ENCODE measurements at regions of chr5 and their contacts with region 1.

Region 1: GRCh38 chr5:44278469-44278868 is 110.8 kb downstream of the FGF10 start:
- DNase-seq: no peak
- ATAC-seq: no peak
- H3K4me3 ChIP-seq: no peak overlapping the region
- H3K27ac ChIP-seq: no peak overlapping the region
- H3K4me1 ChIP-seq: no peaks in the 10 kb centered on the region
- H3K27me3 ChIP-seq: no peaks in the 10 kb centered on the region
- CTCF ChIP-seq: no peak

Region 2: GRCh38 chr5:44225231-44226160 is 53.0 kb before region 1 on chr5:
- intact Hi-C with region 1: no loop called
- DNase-seq: no peak
- ATAC-seq: no peak
- H3K4me3 ChIP-seq: no peak overlapping the region
- H3K27ac ChIP-seq: no peak overlapping the region
- H3K4me1 ChIP-seq: no peaks in the 10 kb centered on the region
- H3K27me3 ChIP-seq: no peaks in the 10 kb centered on the region
- CTCF ChIP-seq: no peak

Region 3: GRCh38 chr5:44536650-44537260 is 258.3 kb after region 1 on chr5:
- intact Hi-C with region 1: no loop called
- DNase-seq: no peak
- ATAC-seq: peak in 3 of 4 donors; percentile 55 to 75 (median 59)
- H3K4me3 ChIP-seq: no peak overlapping the region
- H3K27ac ChIP-seq: no peak overlapping the region
- H3K4me1 ChIP-seq: peaks cover 15% of the 10 kb centered on the region
- H3K27me3 ChIP-seq: no peaks in the 10 kb centered on the region
- CTCF ChIP-seq: peak; percentile 80

Region 4: GRCh38 chr5:44727100-44727499 is 448.6 kb after region 1 on chr5:
- intact Hi-C with region 1: loop called in 1 of 2 experiments (anchors 5 kb)
- DNase-seq: no peak
- ATAC-seq: no peak
- H3K4me3 ChIP-seq: no peak overlapping the region
- H3K27ac ChIP-seq: no peak overlapping the region
- H3K4me1 ChIP-seq: no peaks in the 10 kb centered on the region
- H3K27me3 ChIP-seq: no peaks in the 10 kb centered on the region
- CTCF ChIP-seq: no peak

Measured in psoas muscle (tissue), 8 donors.